Lower leg skin (tissue), 4 donors: ENCODE measurements at regions of chr15 and their contacts with region 1.

Region 1: GRCh38 chr15:99068186-99068585 is 36.7 kb upstream of the SYNM start:
- DNase-seq: peak in 1 of 2 donors; percentile 67
- H3K4me3 ChIP-seq: no peak overlapping the region
- CTCF ChIP-seq: no peak
- POLR2A ChIP-seq: no peak

Region 2: GRCh38 chr15:97708252-97708651 is 1359.9 kb before region 1 on chr15:
- intact Hi-C with region 1: no loop called
- DNase-seq: no peak
- H3K4me3 ChIP-seq: no peak overlapping the region
- CTCF ChIP-seq: no peak
- POLR2A ChIP-seq: no peak

Region 3: GRCh38 chr15:98518823-98519561 is 549.2 kb before region 1 on chr15:
- intact Hi-C with region 1: loop called (anchors 10 kb)
- DNase-seq: peak in 1 of 2 donors; percentile 82
- H3K4me3 ChIP-seq: no peak overlapping the region
- CTCF ChIP-seq: peak in 1 of 3 donors; percentile 77
- POLR2A ChIP-seq: no peak

Region 4: GRCh38 chr15:98647774-98648653 is 420.2 kb before region 1 on chr15 and contains the start of gene IGF1R:
- intact Hi-C with region 1: no loop called
- DNase-seq: peak; percentile 74 to 95
- H3K4me3 ChIP-seq: peak within 1 kb of the TSS; percentile 65
- CTCF ChIP-seq: no peak
- POLR2A ChIP-seq: no peak
- total RNA-seq, gene IGF1R: 59.6 to 172 (median 88.5) TPM

Region 5: DNA sequence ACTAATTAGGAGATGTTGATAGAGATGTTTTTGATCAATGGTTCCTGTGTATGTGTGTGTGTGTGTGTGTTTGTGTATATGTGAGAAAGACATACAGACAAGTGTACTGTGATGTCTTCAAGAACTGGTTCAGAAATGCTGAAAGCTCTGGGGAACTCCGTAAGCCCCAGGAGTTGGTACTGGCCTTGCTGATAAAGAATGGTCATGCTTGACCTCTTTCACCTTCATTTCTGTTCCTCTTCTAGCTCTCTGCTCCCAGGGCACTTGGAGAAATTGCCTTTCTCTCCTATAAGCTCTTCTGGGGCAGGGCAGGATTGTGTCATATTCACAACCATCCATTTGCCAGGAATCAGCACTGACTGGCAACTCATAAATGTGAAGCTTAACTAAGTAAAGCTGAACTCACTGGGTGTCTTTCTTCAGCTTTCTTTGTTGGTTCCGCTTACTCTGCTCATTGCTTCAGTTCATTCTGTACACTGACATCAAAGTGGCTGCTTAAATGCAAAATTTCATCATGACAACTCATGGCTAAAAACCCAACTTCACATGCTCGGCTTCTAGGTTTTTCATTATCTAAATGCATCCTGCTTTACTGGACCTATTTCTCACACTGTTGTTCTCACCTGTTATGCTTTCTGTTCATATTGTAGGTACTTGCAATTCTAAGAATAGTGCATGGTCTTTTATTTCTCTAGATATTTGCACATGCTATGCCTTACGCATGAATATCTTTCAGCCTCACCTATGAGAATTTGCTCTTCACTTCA is 827.2 kb after region 1 on chr15:
- intact Hi-C with region 1: no loop called
- DNase-seq: no peak
- H3K4me3 ChIP-seq: no peak overlapping the region
- CTCF ChIP-seq: no peak
- POLR2A ChIP-seq: no peak